ENCODE measurements at regions of chr2 and their contacts with region 1.

Region 1: DNA sequence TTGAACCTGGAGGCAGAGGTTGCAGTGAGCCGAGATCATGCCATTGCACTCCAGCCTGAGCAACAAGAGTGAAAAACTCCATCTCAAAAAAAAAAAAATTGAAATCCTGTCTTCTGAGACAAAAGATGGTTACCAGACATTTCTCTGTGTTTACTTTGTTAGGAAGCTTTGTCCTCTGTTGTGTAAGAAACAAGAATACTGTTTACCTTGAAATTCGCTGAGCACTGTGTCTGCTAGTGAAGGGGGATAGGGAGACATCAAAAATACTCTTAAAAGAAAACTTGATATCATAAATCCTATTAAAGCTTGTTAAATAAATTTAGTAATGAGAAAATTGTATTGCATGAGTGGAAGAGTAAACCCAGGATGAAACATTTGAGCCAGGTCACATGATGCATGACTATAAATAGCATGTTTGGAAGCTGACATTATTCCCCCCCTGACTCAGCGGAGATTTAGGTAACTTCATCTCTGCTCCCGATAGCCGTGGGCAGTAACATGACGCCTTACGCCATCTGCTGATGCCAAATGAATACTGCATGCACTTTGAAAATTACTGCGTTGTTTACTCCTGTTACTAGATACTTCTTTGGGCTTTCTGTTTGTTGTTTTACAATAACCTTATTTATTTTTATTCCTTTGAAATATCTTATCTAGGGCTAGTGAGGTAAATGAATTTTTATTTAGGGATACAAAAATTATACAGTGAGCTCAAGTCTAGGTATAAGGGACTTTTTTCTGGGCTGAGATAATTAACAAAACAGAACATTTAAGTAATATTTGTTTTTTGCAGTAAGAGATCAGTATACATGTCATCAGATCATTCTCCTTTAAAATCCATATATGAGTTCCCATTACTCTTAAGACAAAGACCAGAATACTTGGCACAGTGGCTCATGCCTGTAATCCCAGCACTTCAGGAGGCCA is 134.9 kb downstream of the MAP3K20 start:
- DNase-seq: no peak

Region 2: DNA sequence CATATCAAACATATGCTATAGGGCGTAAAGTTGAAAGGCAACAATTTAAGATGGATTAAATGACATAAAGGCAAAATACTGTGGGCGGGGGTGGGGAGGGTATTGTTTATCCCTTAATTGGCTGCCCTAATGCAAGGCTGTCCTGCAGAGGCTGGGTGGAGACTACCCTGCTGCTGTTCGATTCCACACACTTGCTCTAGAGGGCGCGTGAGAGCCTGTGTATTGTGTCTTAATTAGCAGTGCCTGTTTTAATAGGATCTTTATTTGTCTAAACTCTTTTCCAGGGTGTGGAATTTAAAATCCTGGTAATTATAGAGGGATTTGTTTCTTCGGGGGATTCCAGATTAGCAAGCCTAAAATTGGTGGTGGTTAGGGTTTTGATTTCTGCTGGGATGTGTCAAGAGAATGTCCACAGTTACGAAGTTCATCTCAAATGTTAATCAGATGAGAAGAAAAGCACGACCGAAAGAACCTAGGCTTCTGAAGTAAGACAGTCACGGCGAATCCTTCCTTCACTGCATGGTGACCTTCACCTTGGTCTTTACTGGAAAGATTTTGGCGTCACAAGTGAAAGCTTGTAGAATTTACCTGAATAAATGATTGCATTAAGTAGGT is 238.4 kb before region 1 on chr2:
- intact Hi-C with region 1: loop called (anchors 5 kb)
- DNase-seq: no peak

Region 3: DNA sequence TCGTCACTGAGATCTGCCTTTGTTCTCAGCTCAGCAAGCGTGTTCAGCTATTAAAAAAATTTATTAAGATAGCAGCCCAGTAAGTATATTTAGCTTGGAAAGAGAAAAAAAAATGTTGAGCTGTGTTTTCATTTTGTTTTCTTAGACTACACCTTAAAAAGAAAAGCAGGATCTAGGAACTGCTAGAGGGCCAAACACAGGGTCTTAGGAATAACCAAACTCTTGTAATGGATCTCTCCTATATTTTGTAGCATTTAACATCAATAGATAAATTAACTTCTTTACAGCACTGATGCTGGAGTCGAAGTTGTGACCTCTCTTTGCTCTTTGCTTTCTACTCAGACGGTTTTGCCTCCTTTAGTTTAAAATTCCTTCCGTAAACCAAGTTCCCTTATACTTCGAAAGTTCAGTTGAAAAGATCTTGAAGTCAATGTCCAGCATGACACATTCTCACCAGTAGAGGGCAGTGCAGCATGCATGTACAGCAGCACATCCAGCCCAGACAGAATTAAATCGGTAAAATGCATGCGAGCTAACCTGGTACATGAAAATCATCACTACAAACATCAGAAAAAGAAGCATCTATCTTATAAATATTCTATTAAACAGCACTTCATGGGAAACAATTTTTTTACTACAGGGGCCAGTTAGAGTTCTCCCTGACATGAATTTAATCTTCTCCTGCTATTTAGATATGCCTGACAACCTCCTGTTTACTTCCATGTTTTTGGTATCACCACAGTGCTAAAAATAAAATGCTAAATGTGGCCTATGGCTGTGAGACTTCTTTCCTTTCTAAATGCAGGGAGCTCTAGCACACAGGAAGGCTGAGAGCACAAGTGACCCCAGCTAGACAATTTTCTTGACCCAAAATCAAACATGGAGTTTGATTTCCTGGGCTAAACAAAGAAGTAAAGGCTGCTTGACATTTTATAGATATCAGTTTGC is 183.1 kb before region 1 on chr2:
- intact Hi-C with region 1: loop called (anchors 1 kb)
- DNase-seq: peak; percentile 83

Region 4: DNA sequence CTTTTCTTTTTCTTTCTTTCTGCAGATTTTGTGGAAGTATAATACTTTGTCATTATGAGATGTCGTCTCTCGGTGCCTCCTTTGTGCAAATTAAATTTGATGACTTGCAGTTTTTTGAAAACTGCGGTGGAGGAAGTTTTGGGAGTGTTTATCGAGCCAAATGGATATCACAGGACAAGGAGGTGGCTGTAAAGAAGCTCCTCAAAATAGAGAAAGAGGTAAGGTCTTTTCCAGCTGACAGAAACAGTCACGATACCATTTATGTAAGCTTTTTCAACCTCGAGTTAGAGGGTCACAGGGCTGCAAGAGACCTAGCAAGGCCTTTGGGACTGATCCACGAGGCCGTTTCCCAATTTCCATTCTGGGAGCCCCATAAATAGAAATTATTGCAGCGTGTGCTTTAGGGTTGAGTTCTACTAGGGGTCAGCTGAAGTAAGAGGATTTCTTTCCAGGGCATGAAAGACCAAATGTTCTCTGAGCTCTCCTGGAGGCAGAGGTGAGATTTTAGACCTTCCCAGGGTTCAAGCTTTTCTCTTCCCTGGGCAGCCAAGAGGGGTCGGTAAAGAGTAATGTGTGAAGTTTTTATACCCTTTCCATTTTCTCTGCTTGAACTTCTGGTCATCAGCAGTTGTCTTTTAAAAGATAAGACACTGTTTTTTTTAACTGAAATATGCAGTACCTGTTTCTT is 119.4 kb before region 1 on chr2:
- intact Hi-C with region 1: loop called (anchors 5 kb)
- DNase-seq: no peak

Measured in cardiac septum (tissue), 1 donor.